H1 (cell line): ENCODE measurements at regions of chr4 and their contacts with region 1.

Region 1: DNA sequence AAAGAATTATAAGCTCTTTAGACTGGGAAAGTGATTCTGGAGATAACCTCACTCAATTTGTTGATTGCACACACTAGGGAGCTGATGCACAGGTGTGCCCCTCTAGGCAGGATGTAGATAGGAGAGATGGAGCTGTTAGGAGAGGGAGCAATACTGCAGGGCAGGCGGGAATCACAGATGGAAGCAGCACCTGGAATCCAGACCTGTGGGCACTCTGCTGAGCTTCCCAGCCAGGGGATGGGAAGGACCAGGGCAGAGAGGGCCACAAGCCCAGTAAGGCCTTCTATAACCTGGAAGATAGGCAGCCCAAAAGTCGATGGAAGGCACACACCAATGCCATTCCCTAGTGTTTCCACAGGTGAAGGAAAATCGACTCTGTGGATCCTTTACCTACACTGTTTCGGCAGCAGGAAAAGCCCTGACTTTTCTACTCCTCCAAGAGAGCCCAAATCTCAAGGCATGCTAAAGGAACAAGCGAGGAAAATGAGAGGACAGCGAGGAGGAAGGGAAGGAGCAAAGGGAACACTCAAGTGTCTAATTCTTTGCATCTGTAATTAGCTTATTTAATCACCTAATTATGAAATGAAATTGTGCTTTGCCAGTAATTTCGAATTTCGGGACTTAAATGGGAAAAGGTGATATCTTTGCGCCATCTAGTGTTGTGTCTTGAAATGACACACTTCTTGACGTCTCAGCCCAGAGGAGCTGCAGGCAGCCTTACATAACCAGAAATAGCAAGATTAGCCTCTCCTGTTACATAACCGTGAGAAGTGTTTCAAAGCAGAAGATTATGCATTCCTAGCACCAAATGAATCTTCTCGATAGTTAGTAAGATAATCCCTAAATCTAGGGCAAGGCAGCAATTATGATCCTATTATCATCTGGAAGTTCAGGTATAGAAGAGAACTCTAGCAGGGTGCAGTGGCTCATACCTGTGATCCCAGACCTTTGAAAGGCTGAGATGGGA is 31.0 kb upstream of the TLR3 start:
- DNase-seq: no peak
- H3K4me3 ChIP-seq: no peak overlapping the region
- H3K27ac ChIP-seq: no peak overlapping the region
- H3K4me1 ChIP-seq: no peaks in the 10 kb centered on the region
- H3K27me3 ChIP-seq: no peaks in the 10 kb centered on the region
- CTCF ChIP-seq: peak; percentile 22 to 78 (median 71)
- EP300 ChIP-seq: no peak
- POLR2A ChIP-seq: no peak
- RAD21 ChIP-seq: peak; percentile 94 to 95

Region 2: DNA sequence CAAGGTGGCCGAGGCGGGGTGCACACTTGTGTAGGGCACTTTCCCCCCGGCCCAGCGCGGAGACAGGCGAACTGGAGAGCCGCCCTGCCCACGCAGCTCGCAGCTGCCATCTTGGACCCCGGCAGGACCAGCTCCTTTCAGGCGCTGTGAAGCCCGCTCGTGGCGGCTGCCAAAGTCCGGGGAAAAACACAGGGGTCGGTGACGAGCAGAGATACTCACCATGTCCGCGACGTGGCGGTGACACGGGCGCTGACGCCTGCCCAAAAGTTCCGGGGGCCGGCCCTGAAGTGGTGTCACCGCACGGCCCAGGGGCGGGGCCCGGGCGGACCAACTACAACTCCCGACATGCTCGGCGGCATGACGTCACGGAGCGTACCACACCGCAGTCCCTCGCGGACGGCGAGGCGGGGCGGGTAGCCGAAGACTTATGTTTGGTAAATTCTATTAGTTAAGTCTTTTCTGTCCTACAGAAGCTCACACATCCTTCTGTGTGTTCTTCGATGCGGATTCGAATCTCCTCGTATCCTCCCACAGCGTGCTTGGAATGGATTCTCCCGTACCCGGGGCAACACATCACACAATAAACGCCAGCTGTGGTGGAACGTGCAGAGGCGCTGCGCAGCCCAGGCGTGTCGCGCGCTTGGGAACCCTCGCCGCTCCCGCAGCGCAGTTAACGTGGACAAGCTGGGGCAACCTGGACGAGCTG is 612.2 kb before region 1 on chr4 and contains the start of gene UFSP2:
- CTCF ChIA-PET with region 1: interaction called, 16 read pairs
- POLR2A ChIA-PET with region 1: no interaction called
- DNase-seq: peak; percentile 46 to 90
- H3K4me3 ChIP-seq: peak within 1 kb of the TSS; percentile 85 to 98 (median 90)
- H3K27ac ChIP-seq: peak within 1 kb of the TSS; percentile 100
- H3K4me1 ChIP-seq: peaks cover 0 to 5% (median 2%) of the 10 kb centered on the region in 4 experiments; a peak in 3 of 7 replicates
- H3K27me3 ChIP-seq: no peaks in the 10 kb centered on the region
- CTCF ChIP-seq: no peak
- EP300 ChIP-seq: peak in 1 of 2 experiments; percentile 99; a peak in 2 of 3 replicates
- POLR2A ChIP-seq: peak in 1 of 2 experiments; percentile 43; a peak in 1 of 3 replicates
- RAD21 ChIP-seq: peak in 1 of 2 experiments; percentile 7; a peak in 1 of 4 replicates
- total RNA-seq, gene UFSP2: 24.0 and 26.0 TPM in 2 replicates

Region 3: DNA sequence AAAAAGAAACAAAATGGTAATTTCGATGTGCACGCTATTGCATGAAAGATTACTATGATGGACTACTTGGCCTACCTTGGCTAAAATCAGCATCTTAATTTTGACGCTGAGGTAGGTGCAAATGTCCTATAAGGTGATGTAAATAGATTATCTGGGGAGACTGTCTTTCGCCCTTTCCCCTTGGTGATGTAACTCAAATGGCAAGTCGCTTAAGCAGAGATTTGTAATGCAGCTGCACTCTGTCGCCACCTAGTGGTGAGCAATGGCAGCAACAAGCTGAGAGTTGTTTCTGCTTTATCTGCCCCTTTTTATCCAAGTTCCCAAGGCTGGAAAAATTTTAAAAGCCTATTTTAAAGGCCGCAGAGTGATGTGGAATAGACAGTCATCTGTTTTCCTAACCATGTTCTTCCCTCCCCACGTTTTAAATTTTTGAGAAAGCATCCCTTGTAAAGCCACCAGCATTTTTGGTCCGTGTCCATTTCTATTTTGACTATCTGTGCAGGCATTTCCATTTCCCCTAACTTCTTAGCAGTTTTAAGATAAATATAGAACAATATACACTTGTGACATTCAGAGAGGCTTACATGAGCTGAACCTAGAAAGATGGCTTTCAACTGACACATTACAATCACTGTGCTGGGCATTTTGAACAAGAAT is 440.3 kb before region 1 on chr4:
- CTCF ChIA-PET with region 1: interaction called, 25 read pairs
- POLR2A ChIA-PET with region 1: no interaction called
- DNase-seq: peak in 1 of 2 experiments; percentile 81
- H3K4me3 ChIP-seq: no peak overlapping the region
- H3K27ac ChIP-seq: no peak overlapping the region
- H3K4me1 ChIP-seq: peaks cover 0 to 2% (median 0%) of the 10 kb centered on the region in 4 experiments; a peak in 1 of 7 replicates
- H3K27me3 ChIP-seq: no peaks in the 10 kb centered on the region
- CTCF ChIP-seq: peak; percentile 74 to 97 (median 85)
- EP300 ChIP-seq: no peak
- POLR2A ChIP-seq: no peak
- RAD21 ChIP-seq: peak; percentile 94 to 95

Region 4: GRCh38 chr4:185640811-185641675 is 396.9 kb before region 1 on chr4:
- CTCF ChIA-PET with region 1: interaction called, 14 read pairs
- POLR2A ChIA-PET with region 1: no interaction called
- DNase-seq: no peak
- H3K4me3 ChIP-seq: no peak overlapping the region
- H3K27ac ChIP-seq: no peak overlapping the region
- H3K4me1 ChIP-seq: peaks cover 0 to 16% (median 6%) of the 10 kb centered on the region in 4 experiments; a peak in 4 of 7 replicates
- H3K27me3 ChIP-seq: no peaks in the 10 kb centered on the region
- CTCF ChIP-seq: peak in 2 of 3 experiments; percentile 12 to 23; a peak in 2 of 4 replicates
- EP300 ChIP-seq: no peak
- POLR2A ChIP-seq: no peak
- RAD21 ChIP-seq: peak in 1 of 2 experiments; percentile 41

Region 5: GRCh38 chr4:186067757-186068385 is 29.9 kb after region 1 on chr4:
- CTCF ChIA-PET with region 1: interaction called, 11 read pairs
- POLR2A ChIA-PET with region 1: no interaction called
- DNase-seq: peak; percentile 10 to 45
- H3K4me3 ChIP-seq: no peak overlapping the region
- H3K27ac ChIP-seq: no peak overlapping the region
- H3K4me1 ChIP-seq: peaks cover 0 to 7% (median 3%) of the 10 kb centered on the region in 4 experiments; a peak in 3 of 7 replicates
- H3K27me3 ChIP-seq: no peaks in the 10 kb centered on the region
- CTCF ChIP-seq: peak; percentile 40 to 74 (median 59)
- EP300 ChIP-seq: no peak
- POLR2A ChIP-seq: no peak
- RAD21 ChIP-seq: peak; percentile 77 to 86

Region 6: DNA sequence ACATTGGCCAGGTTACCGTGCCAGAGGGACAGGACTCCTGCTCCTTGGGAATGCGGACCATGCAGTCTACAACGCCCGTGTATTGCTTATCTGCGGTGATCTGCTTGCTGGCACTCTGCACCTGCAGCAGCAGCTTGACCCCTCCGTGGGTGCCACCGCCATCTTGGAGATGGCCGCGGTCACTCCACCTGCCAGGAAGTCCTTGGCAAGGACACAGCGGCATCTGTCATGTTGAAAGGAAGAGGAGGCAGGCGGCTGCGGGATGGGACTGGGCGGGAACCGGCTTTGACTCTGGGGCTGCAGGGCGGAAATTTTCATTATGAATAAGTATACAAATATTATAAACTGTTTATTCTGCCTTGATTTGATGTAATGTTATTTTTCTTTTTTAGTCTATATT is 291.4 kb after region 1 on chr4:
- CTCF ChIA-PET with region 1: no interaction called
- POLR2A ChIA-PET with region 1: no interaction called
- DNase-seq: no peak
- H3K4me3 ChIP-seq: no peak overlapping the region
- H3K27ac ChIP-seq: no peak overlapping the region
- H3K4me1 ChIP-seq: no peaks in the 10 kb centered on the region
- H3K27me3 ChIP-seq: no peaks in the 10 kb centered on the region
- CTCF ChIP-seq: no peak
- EP300 ChIP-seq: no peak
- POLR2A ChIP-seq: no peak
- RAD21 ChIP-seq: no peak